Activated CD4-positive, alpha-beta T cell treated with anti-CD3 and anti-CD28 coated beads, Interleukin-2, amount 10 ng/mL, durations not matched to agents 24 days and 14 days (primary cell): ENCODE measurements at regions of chr1 and their contacts with region 1.

Region 1: DNA sequence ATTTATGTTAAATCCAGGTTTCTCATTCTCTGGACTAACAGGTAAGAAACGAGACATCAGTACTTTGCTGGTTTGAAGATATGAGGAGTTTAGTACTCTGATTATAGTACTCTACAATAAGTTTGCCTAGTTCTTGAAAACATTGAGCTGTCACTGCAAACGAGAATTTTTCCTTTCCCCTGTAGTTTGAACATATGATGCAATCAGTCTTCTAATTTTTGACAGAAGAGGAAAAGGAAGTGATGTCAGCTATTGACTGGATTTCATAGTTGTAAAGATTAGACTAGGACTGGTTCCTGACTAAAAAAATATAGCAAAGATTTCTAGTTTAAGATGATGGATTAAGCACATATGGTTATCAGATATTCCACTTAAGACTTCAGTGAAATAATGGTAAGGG is 461.9 kb downstream of the LRRIQ3 start:
- DNase-seq: no peak
- H3K4me3 Mint-ChIP-seq: no peak overlapping the region
- H3K27ac Mint-ChIP-seq: no peak overlapping the region
- H3K4me1 Mint-ChIP-seq: no peaks in the 10 kb centered on the region
- H3K27me3 Mint-ChIP-seq: no peaks in the 10 kb centered on the region

Region 2: DNA sequence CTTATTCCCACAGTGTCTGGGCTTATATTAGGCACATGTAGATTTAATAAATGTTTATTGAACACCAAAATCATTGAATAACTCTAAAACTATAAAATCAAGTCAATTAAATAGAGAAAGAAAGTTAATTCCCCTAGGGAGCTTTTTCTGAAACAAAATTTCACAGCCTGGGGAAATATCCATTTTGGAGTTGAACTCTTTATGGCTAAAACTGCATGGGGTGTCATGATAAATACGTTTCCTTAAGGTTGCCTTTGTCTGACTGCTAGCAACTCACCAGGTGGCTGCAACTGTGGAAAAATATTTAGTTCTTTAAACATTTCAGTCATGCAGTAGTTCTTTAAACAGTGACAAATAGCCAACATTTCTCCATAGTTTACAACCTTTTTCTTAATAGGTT is 34.3 kb before region 1 on chr1:
- intact Hi-C with region 1: loop called (anchors 1 kb)
- DNase-seq: no peak
- H3K4me3 Mint-ChIP-seq: no peak overlapping the region
- H3K27ac Mint-ChIP-seq: no peak overlapping the region
- H3K4me1 Mint-ChIP-seq: no peaks in the 10 kb centered on the region
- H3K27me3 Mint-ChIP-seq: no peaks in the 10 kb centered on the region